B cell (primary cell): ENCODE measurements at regions of chr11 and their contacts with region 1.

Region 1: DNA sequence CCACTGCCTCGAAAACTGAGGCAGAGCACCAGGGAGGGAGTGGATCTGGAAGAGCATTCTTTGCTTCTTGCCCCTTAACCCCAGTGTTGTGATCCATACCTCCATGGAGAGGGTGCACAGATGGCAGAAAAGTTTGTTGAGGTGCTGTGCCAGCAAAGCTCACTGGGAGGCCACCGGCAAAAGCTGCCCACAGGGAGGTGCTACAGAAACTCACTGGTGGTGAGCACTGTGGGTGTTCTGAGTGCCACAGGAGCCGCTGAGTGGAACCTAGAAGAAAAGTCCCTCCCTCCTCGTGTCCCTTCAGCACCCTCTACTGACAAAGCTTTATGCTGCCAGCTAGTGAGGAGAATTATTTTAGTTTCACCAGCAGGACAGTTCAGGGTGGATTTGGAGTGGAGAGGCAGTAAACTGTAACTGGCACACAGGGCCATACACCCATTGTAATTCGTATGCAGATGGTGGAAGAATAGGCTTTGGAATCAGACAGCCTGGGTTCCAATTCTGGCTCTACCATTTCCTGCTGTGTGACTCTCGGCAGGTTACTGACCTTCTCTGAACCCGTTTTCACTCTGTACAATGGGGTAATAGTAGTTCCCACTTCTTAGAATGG is 84.6 kb downstream of the SWAP70 start:
- DNase-seq: peak; percentile 88
- ATAC-seq: peak; percentile 77
- H3K4me3 ChIP-seq: peak overlapping the region in 3 of 5 experiments; percentile 4 to 30 (median 22)
- H3K4me3 Mint-ChIP-seq: peak overlapping the region; percentile 66
- H3K27ac ChIP-seq: peak overlapping the region; percentile 40 to 86
- H3K27ac Mint-ChIP-seq: peak overlapping the region; percentile 78
- H3K4me1 ChIP-seq: peaks cover 48 to 49% of the 10 kb centered on the region in 2 donors
- H3K4me1 Mint-ChIP-seq: peaks cover 60% of the 10 kb centered on the region
- H3K27me3 ChIP-seq: no peaks in the 10 kb centered on the region
- H3K27me3 Mint-ChIP-seq: no peaks in the 10 kb centered on the region
- CTCF ChIP-seq: peak; percentile 83

Region 2: GRCh38 chr11:9367551-9367950 is 380.9 kb before region 1 on chr11:
- CTCF ChIA-PET with region 1: no interaction called
- POLR2A ChIA-PET with region 1: no interaction called
- intact Hi-C with region 1: no loop called
- DNase-seq: no peak
- ATAC-seq: no peak
- H3K4me3 ChIP-seq: no peak overlapping the region
- H3K4me3 Mint-ChIP-seq: no peak overlapping the region
- H3K27ac ChIP-seq: no peak overlapping the region
- H3K27ac Mint-ChIP-seq: no peak overlapping the region
- H3K4me1 ChIP-seq: peaks cover 0 to 9% of the 10 kb centered on the region in 2 donors
- H3K4me1 Mint-ChIP-seq: peaks cover 9% of the 10 kb centered on the region
- H3K27me3 ChIP-seq: peaks cover 0 to 2% (median 0%) of the 10 kb centered on the region in 4 experiments
- H3K27me3 Mint-ChIP-seq: peaks cover 9% of the 10 kb centered on the region
- CTCF ChIP-seq: no peak

Region 3: GRCh38 chr11:9506489-9507276 is 241.8 kb before region 1 on chr11:
- CTCF ChIA-PET with region 1: interaction called, 33 read pairs
- POLR2A ChIA-PET with region 1: no interaction called
- intact Hi-C with region 1: no loop called
- DNase-seq: peak; percentile 81
- ATAC-seq: peak; percentile 69
- H3K4me3 ChIP-seq: no peak overlapping the region
- H3K4me3 Mint-ChIP-seq: no peak overlapping the region
- H3K27ac ChIP-seq: no peak overlapping the region
- H3K27ac Mint-ChIP-seq: no peak overlapping the region
- H3K4me1 ChIP-seq: peaks cover 3 to 7% of the 10 kb centered on the region in 2 donors
- H3K4me1 Mint-ChIP-seq: peaks cover 9% of the 10 kb centered on the region
- H3K27me3 ChIP-seq: no peaks in the 10 kb centered on the region
- H3K27me3 Mint-ChIP-seq: no peaks in the 10 kb centered on the region
- CTCF ChIP-seq: peak; percentile 92

Region 4: GRCh38 chr11:9573052-9573774 is 175.3 kb before region 1 on chr11 and contains the start of gene WEE1:
- CTCF ChIA-PET with region 1: interaction called, 36 read pairs
- POLR2A ChIA-PET with region 1: interaction called, 3 read pairs
- intact Hi-C with region 1: loop called (anchors 1 kb)
- DNase-seq: peak; percentile 97
- ATAC-seq: peak; percentile 87
- H3K4me3 ChIP-seq: peak within 1 kb of the TSS; percentile 52 to 96 (median 90)
- H3K4me3 Mint-ChIP-seq: peak within 1 kb of the TSS; percentile 97
- H3K27ac ChIP-seq: peak within 1 kb of the TSS; percentile 83 to 89
- H3K27ac Mint-ChIP-seq: peak within 1 kb of the TSS; percentile 94
- H3K4me1 ChIP-seq: peaks cover 51 to 55% of the 10 kb centered on the region in 2 donors
- H3K4me1 Mint-ChIP-seq: peaks cover 64% of the 10 kb centered on the region
- H3K27me3 ChIP-seq: no peaks in the 10 kb centered on the region
- H3K27me3 Mint-ChIP-seq: no peaks in the 10 kb centered on the region
- CTCF ChIP-seq: no peak
- total RNA-seq, gene WEE1: 31.2 and 31.3 TPM in 2 replicates

Region 5: GRCh38 chr11:9663699-9664275 is 84.7 kb before region 1 on chr11 and contains the start of gene SWAP70:
- CTCF ChIA-PET with region 1: interaction called, 44 read pairs
- POLR2A ChIA-PET with region 1: interaction called, 5 read pairs
- intact Hi-C with region 1: no loop called
- DNase-seq: peak; percentile 93
- ATAC-seq: peak; percentile 85
- H3K4me3 ChIP-seq: peak within 1 kb of the TSS; percentile 83 to 100 (median 94)
- H3K4me3 Mint-ChIP-seq: peak within 1 kb of the TSS; percentile 94
- H3K27ac ChIP-seq: peak within 1 kb of the TSS; percentile 84 to 95
- H3K27ac Mint-ChIP-seq: peak within 1 kb of the TSS; percentile 88
- H3K4me1 ChIP-seq: peaks cover 47 to 50% of the 10 kb centered on the region in 2 donors
- H3K4me1 Mint-ChIP-seq: peaks cover 63% of the 10 kb centered on the region
- H3K27me3 ChIP-seq: no peaks in the 10 kb centered on the region
- H3K27me3 Mint-ChIP-seq: no peaks in the 10 kb centered on the region
- CTCF ChIP-seq: no peak
- total RNA-seq, gene SWAP70: 200 and 203 TPM in 2 replicates

Region 6: DNA sequence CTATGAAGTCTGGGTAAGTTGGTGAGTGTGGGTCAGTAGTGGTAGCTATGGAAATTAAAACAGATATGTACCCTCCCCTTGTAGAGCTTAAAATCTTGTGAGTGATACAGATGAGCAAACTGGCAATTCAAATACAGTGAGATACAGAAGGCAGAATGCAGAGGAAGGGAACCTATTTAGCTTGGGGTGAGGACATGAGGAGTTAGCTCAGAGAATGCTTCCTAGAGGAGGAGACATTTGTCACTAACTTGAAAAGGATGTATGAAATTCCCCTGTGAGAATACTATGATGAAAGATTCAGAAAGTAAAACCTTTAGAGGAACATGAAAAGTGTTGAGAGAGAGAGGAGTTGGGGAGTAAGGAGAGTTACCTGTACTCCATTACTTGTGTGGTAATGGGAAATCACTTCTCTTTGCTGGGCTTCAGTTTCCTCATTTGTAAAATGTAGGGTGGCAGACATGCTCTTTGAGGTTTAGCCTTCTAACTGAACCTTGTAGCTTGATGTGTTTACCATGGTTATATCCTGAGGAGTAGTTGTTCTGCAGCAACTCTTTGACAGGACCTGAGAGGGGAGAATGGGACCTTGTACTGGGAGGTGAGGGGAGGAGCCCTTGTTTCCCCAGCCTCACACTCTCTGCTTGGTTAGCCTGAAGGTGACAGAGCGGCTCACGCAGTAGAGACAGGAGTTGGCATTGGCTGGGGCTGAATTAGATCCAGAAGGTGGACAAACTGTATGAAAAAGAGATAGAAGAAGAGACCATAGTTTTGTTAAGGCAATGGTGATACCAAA is 66.7 kb before region 1 on chr11:
- CTCF ChIA-PET with region 1: interaction called, 94 read pairs
- POLR2A ChIA-PET with region 1: interaction called, 9 read pairs
- intact Hi-C with region 1: no loop called
- DNase-seq: peak; percentile 71
- ATAC-seq: peak; percentile 58
- H3K4me3 ChIP-seq: peak overlapping the region in 3 of 5 experiments; percentile 11 to 28 (median 22)
- H3K4me3 Mint-ChIP-seq: no peak overlapping the region
- H3K27ac ChIP-seq: peak overlapping the region; percentile 62 to 85
- H3K27ac Mint-ChIP-seq: no peak overlapping the region
- H3K4me1 ChIP-seq: peaks cover 86 to 88% of the 10 kb centered on the region in 2 donors
- H3K4me1 Mint-ChIP-seq: peaks cover 67% of the 10 kb centered on the region
- H3K27me3 ChIP-seq: no peaks in the 10 kb centered on the region
- H3K27me3 Mint-ChIP-seq: no peaks in the 10 kb centered on the region
- CTCF ChIP-seq: no peak

Region 7: DNA sequence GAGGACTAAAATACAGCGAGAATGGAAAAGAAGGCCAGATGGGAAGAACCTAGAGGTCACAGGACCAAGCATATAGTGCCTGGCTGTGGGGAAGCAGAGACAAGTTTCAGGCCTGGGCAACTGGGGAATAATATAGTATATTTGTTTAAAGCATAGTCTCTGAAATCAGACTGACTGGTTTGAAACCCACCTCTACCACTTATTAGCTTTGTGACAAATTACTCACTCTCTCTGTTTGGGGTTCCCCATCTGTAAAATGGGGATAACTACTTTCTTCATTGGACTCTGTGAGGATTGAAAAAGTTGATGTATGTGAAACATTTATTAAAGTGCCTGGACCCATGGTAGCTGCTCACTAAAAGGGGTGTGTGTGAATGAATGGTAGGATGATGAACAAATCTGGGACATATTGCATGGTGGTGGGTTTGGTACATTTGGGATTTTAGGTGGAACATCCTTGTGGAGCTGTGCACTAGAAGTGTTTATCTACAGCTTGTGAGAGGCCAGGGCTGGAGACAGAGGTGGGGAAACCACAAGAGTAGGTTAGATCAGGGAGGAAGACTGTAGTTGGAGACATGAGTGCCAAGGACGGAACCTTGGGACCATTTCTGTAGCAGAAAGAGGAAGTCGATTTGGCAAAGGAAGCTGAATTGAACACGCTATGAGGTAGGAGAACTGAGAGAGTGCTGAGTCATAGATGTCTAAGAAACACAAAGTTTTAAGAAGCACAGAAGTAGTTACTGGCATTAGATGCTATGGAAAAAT is 32.0 kb before region 1 on chr11:
- CTCF ChIA-PET with region 1: interaction called, 50 read pairs
- POLR2A ChIA-PET with region 1: interaction called, 5 read pairs
- intact Hi-C with region 1: loop called (anchors 5 kb)
- DNase-seq: peak; percentile 79
- ATAC-seq: peak; percentile 69
- H3K4me3 ChIP-seq: no peak overlapping the region
- H3K4me3 Mint-ChIP-seq: peak overlapping the region; percentile 58
- H3K27ac ChIP-seq: peak overlapping the region; percentile 60 to 66
- H3K27ac Mint-ChIP-seq: peak overlapping the region; percentile 90
- H3K4me1 ChIP-seq: peaks cover 82 to 91% of the 10 kb centered on the region in 2 donors
- H3K4me1 Mint-ChIP-seq: peaks cover 77% of the 10 kb centered on the region
- H3K27me3 ChIP-seq: no peaks in the 10 kb centered on the region
- H3K27me3 Mint-ChIP-seq: no peaks in the 10 kb centered on the region
- CTCF ChIP-seq: no peak

Region 8: DNA sequence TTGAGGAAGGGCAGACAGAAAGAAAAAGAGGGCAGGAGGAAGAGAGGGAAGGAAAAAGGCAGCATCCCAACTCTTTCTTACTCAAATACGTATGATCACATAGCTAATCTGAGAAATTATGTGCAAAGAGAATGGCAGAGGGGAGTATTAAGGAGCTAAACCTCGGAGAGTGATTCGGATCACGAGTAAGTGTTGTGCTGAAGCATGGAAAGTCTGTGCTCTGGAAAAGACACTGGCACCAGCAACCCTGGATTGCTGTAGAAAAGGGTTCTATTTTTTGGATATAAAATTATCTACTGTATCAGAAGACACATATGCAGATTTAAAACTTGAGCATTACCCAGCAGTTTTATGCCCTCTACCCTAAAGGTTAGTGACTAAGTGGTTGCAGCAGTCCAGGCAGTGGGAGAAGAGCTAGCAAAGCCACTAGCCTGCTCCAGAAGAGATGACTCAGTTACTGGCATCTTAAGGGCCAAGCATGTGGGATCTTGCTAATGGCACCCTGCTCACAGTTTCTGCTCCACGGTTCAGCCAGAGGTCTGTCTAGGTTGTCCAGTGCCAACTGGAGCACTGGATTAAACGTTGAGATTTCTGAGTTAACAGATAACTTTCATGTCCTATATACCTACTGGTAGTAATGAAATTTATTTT is 67.1 kb after region 1 on chr11:
- CTCF ChIA-PET with region 1: no interaction called
- POLR2A ChIA-PET with region 1: no interaction called
- intact Hi-C with region 1: no loop called
- DNase-seq: no peak
- ATAC-seq: no peak
- H3K4me3 ChIP-seq: no peak overlapping the region
- H3K4me3 Mint-ChIP-seq: no peak overlapping the region
- H3K27ac ChIP-seq: no peak overlapping the region
- H3K27ac Mint-ChIP-seq: no peak overlapping the region
- H3K4me1 ChIP-seq: no peaks in the 10 kb centered on the region
- H3K4me1 Mint-ChIP-seq: no peaks in the 10 kb centered on the region
- H3K27me3 ChIP-seq: no peaks in the 10 kb centered on the region
- H3K27me3 Mint-ChIP-seq: no peaks in the 10 kb centered on the region
- CTCF ChIP-seq: no peak